ENCODE measurements at regions of chr12 and their contacts with region 1.

Region 1: DNA sequence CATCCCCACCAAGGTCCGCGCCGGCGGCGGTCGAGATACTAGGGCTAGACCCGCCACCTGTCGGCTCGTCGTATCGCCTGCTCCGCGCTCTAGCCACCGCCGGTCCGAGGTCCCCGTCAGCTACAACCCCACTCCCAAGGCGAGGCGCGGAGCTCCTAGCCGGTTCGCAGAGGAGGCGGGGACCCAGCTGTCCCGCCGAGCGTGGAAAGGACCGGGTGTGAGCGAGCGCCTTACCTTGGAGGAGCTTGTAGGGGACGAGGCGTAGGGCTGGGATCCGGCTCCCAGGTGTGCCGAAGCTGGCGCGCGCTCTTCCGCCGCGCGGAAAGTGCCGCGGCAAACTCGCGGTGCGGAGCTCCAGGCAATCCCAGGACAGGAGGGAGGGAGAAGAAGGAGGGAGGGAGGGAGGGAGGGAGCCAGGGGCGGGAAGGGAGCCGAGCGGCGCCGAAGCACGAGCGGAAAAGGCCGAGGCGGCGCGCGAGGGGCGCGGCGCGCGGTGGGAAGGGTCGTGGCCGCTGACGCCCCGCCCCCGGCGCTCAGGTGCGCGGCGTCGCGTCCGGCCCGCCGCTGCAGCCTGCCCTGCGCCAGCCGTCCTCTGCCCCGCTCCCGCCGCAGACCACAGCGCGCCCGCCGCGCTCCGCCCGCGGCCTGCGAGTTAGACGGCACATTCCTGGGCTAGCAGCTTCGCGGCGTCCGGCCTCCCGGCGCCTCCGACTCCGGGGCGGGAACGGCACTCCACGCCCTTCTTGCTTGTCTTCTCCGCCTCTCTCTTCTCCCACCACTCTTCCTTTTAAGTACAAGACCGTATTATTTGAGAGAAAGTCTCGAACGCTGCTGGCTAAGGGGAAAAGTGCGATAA is at the start of gene PAWR:
- DNase-seq: peak; percentile 86
- H3K4me3 Mint-ChIP-seq: peak within 1 kb of the TSS; percentile 87
- H3K27ac Mint-ChIP-seq: peak within 1 kb of the TSS; percentile 96
- H3K4me1 Mint-ChIP-seq: peaks cover 32% of the 10 kb centered on the region
- H3K27me3 Mint-ChIP-seq: no peaks in the 10 kb centered on the region
- CTCF ChIP-seq: peak; percentile 17
- total RNA-seq, gene PAWR: 248 and 330 TPM in 2 replicates

Region 2: GRCh38 chr12:79407671-79408622 is 282.9 kb before region 1 on chr12:
- CTCF ChIA-PET with region 1: no interaction called
- POLR2A ChIA-PET with region 1: interaction called, 3 read pairs
- intact Hi-C with region 1: loop called (anchors 5 kb)
- DNase-seq: peak; percentile 89
- H3K4me3 Mint-ChIP-seq: no peak overlapping the region
- H3K27ac Mint-ChIP-seq: peak overlapping the region; percentile 54
- H3K4me1 Mint-ChIP-seq: peaks cover 13% of the 10 kb centered on the region
- H3K27me3 Mint-ChIP-seq: no peaks in the 10 kb centered on the region
- CTCF ChIP-seq: peak; percentile 75

Region 3: GRCh38 chr12:79547735-79548609 is 142.9 kb before region 1 on chr12:
- CTCF ChIA-PET with region 1: interaction called, 12 read pairs
- POLR2A ChIA-PET with region 1: interaction called, 100 read pairs
- intact Hi-C with region 1: loop called (anchors 1 kb)
- DNase-seq: peak; percentile 79
- H3K4me3 Mint-ChIP-seq: peak overlapping the region; percentile 51
- H3K27ac Mint-ChIP-seq: peak overlapping the region; percentile 44
- H3K4me1 Mint-ChIP-seq: peaks cover 66% of the 10 kb centered on the region
- H3K27me3 Mint-ChIP-seq: no peaks in the 10 kb centered on the region
- CTCF ChIP-seq: peak; percentile 63

Region 4: DNA sequence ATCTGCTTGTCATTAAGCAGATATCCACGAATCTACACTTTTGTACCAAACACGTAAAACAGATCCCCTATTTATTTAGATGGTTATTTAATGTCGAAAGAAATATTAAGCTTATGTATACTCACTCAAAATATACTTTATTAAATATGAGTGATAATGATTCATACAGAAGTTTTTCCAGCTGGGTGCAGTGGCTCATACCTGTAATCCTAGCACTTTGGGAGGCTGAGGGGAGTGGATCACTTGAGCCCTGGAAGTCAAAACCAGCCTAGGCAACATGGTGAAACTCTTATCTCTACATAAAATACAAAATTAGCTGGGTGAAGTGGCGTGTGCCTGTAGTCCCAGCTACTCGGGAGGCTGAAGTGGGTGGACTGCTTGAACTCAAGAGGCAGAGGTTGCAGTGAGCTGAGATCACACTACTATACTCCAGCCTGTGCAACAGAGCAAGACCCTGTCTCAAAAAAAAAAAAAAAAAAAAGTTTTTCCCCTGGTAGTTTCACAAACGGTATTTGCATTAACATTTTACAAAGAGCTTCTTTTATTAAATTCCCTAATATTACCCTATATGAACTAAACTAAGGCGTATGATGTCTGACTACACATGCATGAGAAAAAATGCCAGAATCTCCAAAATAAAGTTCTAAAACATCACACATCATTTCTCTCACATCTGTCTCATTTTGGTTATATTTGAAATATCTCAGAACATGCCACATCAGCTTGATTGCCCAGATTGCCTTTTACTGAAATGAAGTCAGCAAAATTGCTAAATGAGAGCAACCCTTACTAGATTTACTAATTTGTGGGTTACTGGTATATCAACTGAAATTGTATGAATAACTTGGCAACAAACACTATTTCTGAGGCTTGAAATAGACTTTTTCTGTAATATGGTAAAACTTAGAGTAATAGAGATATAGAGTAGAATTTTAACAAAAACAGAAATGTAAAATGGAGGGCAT is 75.0 kb before region 1 on chr12:
- CTCF ChIA-PET with region 1: interaction called, 6 read pairs
- POLR2A ChIA-PET with region 1: interaction called, 103 read pairs
- intact Hi-C with region 1: loop called (anchors 5 kb)
- DNase-seq: no peak
- H3K4me3 Mint-ChIP-seq: no peak overlapping the region
- H3K27ac Mint-ChIP-seq: peak overlapping the region; percentile 78
- H3K4me1 Mint-ChIP-seq: peaks cover 23% of the 10 kb centered on the region
- H3K27me3 Mint-ChIP-seq: no peaks in the 10 kb centered on the region
- CTCF ChIP-seq: no peak

Region 5: GRCh38 chr12:79674629-79675028 is 16.2 kb before region 1 on chr12:
- CTCF ChIA-PET with region 1: interaction called, 18 read pairs
- POLR2A ChIA-PET with region 1: interaction called, 75 read pairs
- intact Hi-C with region 1: no loop called
- DNase-seq: peak; percentile 54
- H3K4me3 Mint-ChIP-seq: peak overlapping the region; percentile 28
- H3K27ac Mint-ChIP-seq: peak overlapping the region; percentile 78
- H3K4me1 Mint-ChIP-seq: peaks cover 39% of the 10 kb centered on the region
- H3K27me3 Mint-ChIP-seq: no peaks in the 10 kb centered on the region
- CTCF ChIP-seq: no peak

Region 6: GRCh38 chr12:79737875-79738718 is 47.2 kb after region 1 on chr12:
- CTCF ChIA-PET with region 1: interaction called, 12 read pairs
- POLR2A ChIA-PET with region 1: interaction called, 25 read pairs
- intact Hi-C with region 1: loop called (anchors 1 kb)
- DNase-seq: peak; percentile 80
- H3K4me3 Mint-ChIP-seq: no peak overlapping the region
- H3K27ac Mint-ChIP-seq: no peak overlapping the region
- H3K4me1 Mint-ChIP-seq: no peaks in the 10 kb centered on the region
- H3K27me3 Mint-ChIP-seq: no peaks in the 10 kb centered on the region
- CTCF ChIP-seq: peak; percentile 62

Region 7: DNA sequence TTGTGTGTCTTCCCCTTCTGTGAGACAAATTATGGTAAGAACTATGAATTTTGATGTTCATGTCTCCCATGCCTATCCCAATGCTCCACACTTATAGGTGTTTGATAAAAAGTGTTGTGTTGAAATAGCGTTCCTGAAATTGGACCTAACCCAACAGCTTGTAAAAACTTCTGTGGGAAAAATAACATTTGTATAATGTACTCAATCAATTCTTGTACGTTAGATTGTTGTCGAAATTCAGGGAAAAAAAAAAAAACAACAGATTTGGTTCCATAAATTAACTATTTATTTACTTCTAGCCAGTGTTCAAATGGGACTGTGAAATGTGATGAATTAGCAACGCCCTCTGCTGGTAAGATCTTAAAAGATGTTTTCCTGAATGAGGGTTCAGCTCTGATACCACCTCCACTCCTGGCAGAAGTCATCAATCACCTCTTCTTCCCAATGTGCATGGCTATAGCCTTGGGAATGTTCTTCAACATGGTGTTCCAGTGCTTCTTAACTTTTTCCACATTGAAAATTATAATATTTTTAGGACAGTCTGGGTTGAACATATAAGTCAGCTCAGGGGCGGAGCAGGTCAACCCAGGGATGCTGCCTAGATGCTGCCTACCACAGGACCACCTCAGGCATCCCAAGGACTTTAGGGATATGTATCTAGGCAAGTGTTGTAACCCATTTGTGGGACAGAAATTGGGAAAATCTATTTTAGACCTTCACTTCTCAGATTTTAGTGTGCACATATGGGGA is 579.1 kb after region 1 on chr12:
- CTCF ChIA-PET with region 1: interaction called, 3 read pairs
- POLR2A ChIA-PET with region 1: no interaction called
- intact Hi-C with region 1: loop called (anchors 5 kb)
- DNase-seq: peak; percentile 69
- H3K4me3 Mint-ChIP-seq: no peak overlapping the region
- H3K27ac Mint-ChIP-seq: no peak overlapping the region
- H3K4me1 Mint-ChIP-seq: peaks cover 23% of the 10 kb centered on the region
- H3K27me3 Mint-ChIP-seq: no peaks in the 10 kb centered on the region
- CTCF ChIP-seq: peak; percentile 68